Breast epithelium (tissue), 4 donors: ENCODE measurements at regions of chrX and their contacts with region 1.

Region 1: DNA sequence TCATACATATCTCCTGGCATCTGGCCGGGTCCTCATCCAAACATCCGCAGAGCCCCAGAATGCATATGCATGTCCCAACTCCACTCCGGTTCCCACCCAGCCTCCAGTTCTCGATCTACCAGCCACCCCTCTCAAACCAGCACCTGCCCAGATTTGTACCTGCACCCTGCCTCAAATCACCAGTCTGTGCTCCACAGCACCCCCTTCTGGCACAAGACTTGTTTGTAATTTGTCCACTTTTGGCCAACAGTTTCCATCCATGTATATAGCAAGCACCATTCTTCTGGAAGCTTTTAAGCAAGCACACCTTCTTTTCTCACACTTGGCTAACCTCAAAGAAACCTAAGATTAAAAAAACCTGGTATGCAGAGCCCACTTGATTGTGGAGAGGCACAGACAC is 644.1 kb downstream of the MID1IP1 start:
- DNase-seq: no peak
- H3K4me3 ChIP-seq: no peak overlapping the region
- H3K27ac ChIP-seq: no peak overlapping the region
- H3K4me1 ChIP-seq: no peaks in the 10 kb centered on the region
- H3K27me3 ChIP-seq: peaks cover 0 to 71% of the 10 kb centered on the region in 2 donors
- CTCF ChIP-seq: no peak
- POLR2A ChIP-seq: no peak

Region 2: DNA sequence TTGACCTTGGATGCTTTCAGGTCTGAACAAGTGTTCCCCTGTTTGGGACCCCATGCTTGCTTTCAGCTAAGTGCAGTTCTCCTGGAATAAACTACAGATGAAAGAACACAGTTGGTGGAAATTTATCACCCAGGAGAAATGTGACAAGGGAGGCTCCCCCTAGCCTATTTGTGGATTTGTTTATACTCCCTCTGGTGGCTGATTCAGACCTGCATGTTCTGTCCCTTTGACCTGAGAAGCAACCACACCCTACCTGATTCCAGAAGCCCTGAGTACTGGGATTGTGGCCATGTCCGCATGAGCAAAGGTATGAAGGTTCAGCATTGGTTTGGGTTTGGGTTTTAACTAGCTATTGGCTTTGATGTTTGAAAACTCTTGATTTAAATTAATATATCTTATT is 203.1 kb before region 1 on chrX:
- intact Hi-C with region 1: loop called (anchors 5 kb)
- DNase-seq: no peak
- H3K4me3 ChIP-seq: no peak overlapping the region
- H3K27ac ChIP-seq: no peak overlapping the region
- H3K4me1 ChIP-seq: no peaks in the 10 kb centered on the region
- H3K27me3 ChIP-seq: peaks cover 0 to 42% of the 10 kb centered on the region in 2 donors
- CTCF ChIP-seq: peak in 1 of 3 donors; percentile 35
- POLR2A ChIP-seq: no peak

Region 3: DNA sequence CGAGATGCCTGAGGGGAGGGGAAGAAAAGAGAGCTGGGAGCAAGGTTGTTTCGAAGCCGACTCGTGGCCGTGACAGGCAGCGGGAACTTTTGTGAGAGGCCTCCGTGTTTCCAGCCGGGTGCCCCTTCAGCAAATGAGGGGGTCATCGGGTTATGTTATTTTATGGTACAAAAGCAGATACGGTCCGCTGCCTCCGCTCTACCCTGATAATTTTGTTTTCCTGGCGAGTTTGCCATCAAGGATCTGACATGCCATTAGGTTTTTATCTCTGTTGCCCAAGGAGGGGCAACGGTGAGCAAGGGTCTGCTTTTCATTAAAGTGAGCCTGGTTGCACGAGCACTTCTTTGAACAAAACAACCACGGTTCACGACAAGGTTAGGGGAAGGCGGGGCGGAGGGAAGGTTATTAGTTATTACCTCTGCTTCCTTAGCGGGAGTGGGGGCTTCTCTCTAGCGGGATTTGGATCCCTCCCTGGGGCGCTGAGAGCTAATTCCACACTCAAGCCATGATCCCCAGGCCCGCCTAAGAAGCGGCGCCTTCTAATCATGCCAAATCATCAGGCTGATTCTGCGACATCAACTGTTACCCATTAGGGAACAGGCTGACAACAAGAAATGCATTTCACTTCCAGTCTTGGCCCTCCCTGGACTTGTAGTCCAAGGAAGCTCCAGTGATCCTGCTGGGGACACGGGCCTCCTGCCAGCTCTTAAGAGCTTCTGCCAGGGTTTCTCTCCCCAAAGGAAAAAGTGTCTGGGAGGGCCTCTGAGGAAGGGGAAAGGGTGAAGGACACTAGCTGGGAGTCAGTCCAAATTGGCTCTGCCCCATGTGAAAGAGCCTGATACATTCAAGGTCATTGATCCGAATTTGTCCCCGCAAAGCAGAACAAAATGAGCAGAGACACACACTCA is 26.4 kb before region 1 on chrX:
- intact Hi-C with region 1: no loop called
- DNase-seq: no peak
- H3K4me3 ChIP-seq: no peak overlapping the region
- H3K27ac ChIP-seq: peak overlapping the region in 1 of 2 donors; percentile 15
- H3K4me1 ChIP-seq: no peaks in the 10 kb centered on the region
- H3K27me3 ChIP-seq: peaks cover 0 to 61% of the 10 kb centered on the region in 2 donors
- CTCF ChIP-seq: no peak
- POLR2A ChIP-seq: no peak